CD8-positive, alpha-beta T cell (primary cell): ENCODE measurements at regions of chr11 and their contacts with region 1.

Region 1: GRCh38 chr11:76380967-76381719 is at the starts of genes GVQW3 and THAP12:
- DNase-seq: peak; percentile 93 to 99 (median 97)
- ATAC-seq: peak; percentile 89
- H3K4me3 ChIP-seq: peak within 1 kb of the TSS; percentile 62 to 64
- H3K4me3 Mint-ChIP-seq: peak within 1 kb of the TSS; percentile 94
- H3K27ac ChIP-seq: peak within 1 kb of the TSS; percentile 46 to 56
- H3K27ac Mint-ChIP-seq: peak within 1 kb of the TSS; percentile 90
- H3K4me1 ChIP-seq: peaks cover 34% of the 10 kb centered on the region
- H3K4me1 Mint-ChIP-seq: peaks cover 67% of the 10 kb centered on the region
- H3K27me3 ChIP-seq: no peaks in the 10 kb centered on the region
- H3K27me3 Mint-ChIP-seq: no peaks in the 10 kb centered on the region
- CTCF ChIP-seq: no peak
- total RNA-seq, gene GVQW3: 1.4 to 1.6 TPM
- total RNA-seq, gene THAP12: 44.7 to 47.2 TPM

Region 2: GRCh38 chr11:74398244-74399159 is 1982.6 kb before region 1 on chr11 and contains the start of gene PGM2L1:
- CTCF ChIA-PET with region 1: no interaction called
- POLR2A ChIA-PET with region 1: no interaction called
- intact Hi-C with region 1: loop called (anchors 5 kb)
- DNase-seq: peak; percentile 85 to 97 (median 95)
- ATAC-seq: peak; percentile 86
- H3K4me3 ChIP-seq: peak within 1 kb of the TSS; percentile 51 to 92
- H3K4me3 Mint-ChIP-seq: peak within 1 kb of the TSS; percentile 99
- H3K27ac ChIP-seq: peak within 1 kb of the TSS; percentile 44 to 58
- H3K27ac Mint-ChIP-seq: peak within 1 kb of the TSS; percentile 96
- H3K4me1 ChIP-seq: peaks cover 10% of the 10 kb centered on the region
- H3K4me1 Mint-ChIP-seq: peaks cover 26% of the 10 kb centered on the region
- H3K27me3 ChIP-seq: no peaks in the 10 kb centered on the region
- H3K27me3 Mint-ChIP-seq: no peaks in the 10 kb centered on the region
- CTCF ChIP-seq: no peak
- total RNA-seq, gene PGM2L1: 5.2 to 5.8 TPM

Region 3: GRCh38 chr11:75241036-75241905 is 1139.9 kb before region 1 on chr11:
- CTCF ChIA-PET with region 1: no interaction called
- POLR2A ChIA-PET with region 1: no interaction called
- intact Hi-C with region 1: loop called in 1 of 2 experiments (anchors 10 kb)
- DNase-seq: peak; percentile 77 to 91 (median 83)
- ATAC-seq: peak; percentile 93
- H3K4me3 ChIP-seq: peak overlapping the region; percentile 31 to 61
- H3K4me3 Mint-ChIP-seq: peak overlapping the region; percentile 79
- H3K27ac ChIP-seq: no peak overlapping the region
- H3K27ac Mint-ChIP-seq: no peak overlapping the region
- H3K4me1 ChIP-seq: peaks cover 9% of the 10 kb centered on the region
- H3K4me1 Mint-ChIP-seq: peaks cover 10% of the 10 kb centered on the region
- H3K27me3 ChIP-seq: peaks cover 17 to 20% of the 10 kb centered on the region in 2 experiments
- H3K27me3 Mint-ChIP-seq: peaks cover 49% of the 10 kb centered on the region
- CTCF ChIP-seq: peak; percentile 77

Region 4: GRCh38 chr11:75562048-75562835 is 818.9 kb before region 1 on chr11 and contains the start of gene SERPINH1:
- CTCF ChIA-PET with region 1: no interaction called
- POLR2A ChIA-PET with region 1: no interaction called
- intact Hi-C with region 1: loop called in 1 of 2 experiments (anchors 5 kb)
- DNase-seq: peak in 8 of 9 experiments; percentile 32 to 74 (median 51)
- ATAC-seq: peak; percentile 79
- H3K4me3 ChIP-seq: peak within 1 kb of the TSS; percentile 81 to 91
- H3K4me3 Mint-ChIP-seq: peak within 1 kb of the TSS; percentile 98
- H3K27ac ChIP-seq: peak within 1 kb of the TSS; percentile 64 to 85
- H3K27ac Mint-ChIP-seq: peak within 1 kb of the TSS; percentile 95
- H3K4me1 ChIP-seq: peaks cover 42% of the 10 kb centered on the region
- H3K4me1 Mint-ChIP-seq: peaks cover 49% of the 10 kb centered on the region
- H3K27me3 ChIP-seq: no peaks in the 10 kb centered on the region
- H3K27me3 Mint-ChIP-seq: no peaks in the 10 kb centered on the region
- CTCF ChIP-seq: no peak
- total RNA-seq, gene SERPINH1: 2.1 to 2.4 TPM

Region 5: DNA sequence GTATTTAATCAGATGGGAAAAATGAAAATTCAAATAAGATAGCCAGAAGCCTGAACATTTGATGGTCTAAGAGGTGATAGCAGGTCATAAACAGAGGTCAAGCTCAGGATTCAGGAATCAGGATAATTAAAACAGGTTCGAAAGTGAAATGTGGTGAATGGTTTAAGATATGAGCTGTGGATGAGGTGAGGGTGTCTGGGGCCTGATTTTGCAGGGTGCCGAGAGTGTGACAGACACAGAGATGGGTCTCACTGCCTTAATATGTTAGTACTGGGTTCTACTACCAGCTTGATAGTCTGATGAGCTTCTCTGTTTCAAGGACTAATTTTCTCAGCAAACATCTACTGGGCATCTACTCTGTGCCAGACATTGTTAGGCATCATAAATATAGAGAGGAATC is 43.7 kb after region 1 on chr11:
- CTCF ChIA-PET with region 1: no interaction called
- POLR2A ChIA-PET with region 1: no interaction called
- intact Hi-C with region 1: loop called in 1 of 2 experiments (anchors 5 kb)
- DNase-seq: no peak
- ATAC-seq: no peak
- H3K4me3 ChIP-seq: no peak overlapping the region
- H3K4me3 Mint-ChIP-seq: no peak overlapping the region
- H3K27ac ChIP-seq: no peak overlapping the region
- H3K27ac Mint-ChIP-seq: no peak overlapping the region
- H3K4me1 ChIP-seq: no peaks in the 10 kb centered on the region
- H3K4me1 Mint-ChIP-seq: peaks cover 3% of the 10 kb centered on the region
- H3K27me3 ChIP-seq: no peaks in the 10 kb centered on the region
- H3K27me3 Mint-ChIP-seq: peaks cover 6% of the 10 kb centered on the region
- CTCF ChIP-seq: no peak

Region 6: DNA sequence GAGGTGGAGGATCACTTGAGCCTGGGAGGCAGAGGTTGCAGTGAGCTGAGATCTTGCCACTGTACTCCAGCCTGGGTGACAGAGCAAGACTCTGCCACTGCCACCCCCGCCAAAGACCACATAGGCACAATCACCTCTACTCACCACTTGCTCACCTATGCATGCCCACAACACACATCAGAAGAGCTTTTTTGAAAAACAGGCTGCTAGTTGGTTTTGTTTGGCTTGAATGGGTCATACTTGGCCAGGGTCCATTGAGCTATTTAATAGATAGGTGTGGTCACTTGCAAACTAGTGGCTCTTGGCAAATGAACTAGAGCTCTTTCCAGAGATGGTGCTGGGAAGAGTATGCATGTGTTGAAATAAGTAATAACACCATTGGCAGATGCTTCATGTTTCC is 143.8 kb after region 1 on chr11:
- CTCF ChIA-PET with region 1: no interaction called
- POLR2A ChIA-PET with region 1: no interaction called
- intact Hi-C with region 1: no loop called
- DNase-seq: no peak
- ATAC-seq: no peak
- H3K4me3 ChIP-seq: no peak overlapping the region
- H3K4me3 Mint-ChIP-seq: no peak overlapping the region
- H3K27ac ChIP-seq: no peak overlapping the region
- H3K27ac Mint-ChIP-seq: no peak overlapping the region
- H3K4me1 ChIP-seq: no peaks in the 10 kb centered on the region
- H3K4me1 Mint-ChIP-seq: no peaks in the 10 kb centered on the region
- H3K27me3 ChIP-seq: no peaks in the 10 kb centered on the region
- H3K27me3 Mint-ChIP-seq: no peaks in the 10 kb centered on the region
- CTCF ChIP-seq: no peak